Gastrocnemius medialis (tissue), 4 donors: ENCODE measurements at regions of chr3 and their contacts with region 1.

Region 1: GRCh38 chr3:59857589-59858346 is 807.9 kb upstream of the CFAP20DC start:
- DNase-seq: peak; percentile 42
- ATAC-seq: peak; percentile 74 to 83
- H3K4me3 ChIP-seq: no peak overlapping the region
- H3K27ac ChIP-seq: no peak overlapping the region
- H3K4me1 ChIP-seq: no peaks in the 10 kb centered on the region
- H3K27me3 ChIP-seq: no peaks in the 10 kb centered on the region
- CTCF ChIP-seq: peak; percentile 61 to 83 (median 66)
- POLR2A ChIP-seq: no peak

Region 2: DNA sequence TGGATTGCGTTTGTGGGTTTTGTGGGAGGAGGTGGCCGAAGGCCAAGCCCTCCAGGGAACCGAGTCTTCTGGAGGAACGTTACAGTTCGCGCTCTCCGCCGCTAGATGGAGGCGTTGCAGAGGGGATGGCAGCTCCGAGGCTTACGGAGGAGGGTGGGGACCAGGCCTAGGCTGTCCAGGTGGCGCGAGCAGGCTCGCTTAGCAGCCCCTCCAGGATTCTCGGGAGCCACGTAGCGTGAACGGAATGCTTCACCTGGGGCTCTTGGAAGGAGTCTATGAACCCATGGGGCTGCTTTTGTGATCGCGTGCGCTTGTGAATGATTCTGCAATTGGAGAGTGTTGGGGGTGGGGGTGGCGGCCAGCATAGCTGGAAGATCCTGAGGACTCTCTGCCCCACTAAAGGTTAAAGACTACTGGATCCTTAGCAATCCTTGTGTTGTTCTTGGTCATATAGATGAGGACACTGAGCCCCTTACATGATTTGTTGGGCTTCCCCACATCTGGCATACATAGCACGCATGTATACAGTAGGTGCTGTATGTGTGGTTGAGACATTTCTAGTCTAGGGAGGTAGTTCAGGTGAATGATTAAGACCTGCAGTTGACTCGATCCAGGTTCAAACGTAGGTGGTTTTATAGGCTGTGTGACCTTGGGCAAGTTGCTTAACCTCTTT is 1216.9 kb before region 1 on chr3:
- in situ Hi-C with region 1: loop called in 1 of 4 experiments (anchors 25 kb)
- intact Hi-C with region 1: no loop called
- DNase-seq: peak; percentile 15 to 46
- ATAC-seq: peak; percentile 78 to 87
- H3K4me3 ChIP-seq: no peak overlapping the region
- H3K27ac ChIP-seq: no peak overlapping the region
- H3K4me1 ChIP-seq: peaks cover 0 to 4% of the 10 kb centered on the region in 2 donors
- H3K27me3 ChIP-seq: no peaks in the 10 kb centered on the region
- CTCF ChIP-seq: peak; percentile 57 to 83 (median 73)
- POLR2A ChIP-seq: no peak

Region 3: GRCh38 chr3:59212128-59212779 is 645.5 kb before region 1 on chr3:
- in situ Hi-C with region 1: loop called in 2 of 4 experiments (anchors 25 kb)
- intact Hi-C with region 1: no loop called
- DNase-seq: no peak
- ATAC-seq: no peak
- H3K4me3 ChIP-seq: no peak overlapping the region
- H3K27ac ChIP-seq: no peak overlapping the region
- H3K4me1 ChIP-seq: no peaks in the 10 kb centered on the region
- H3K27me3 ChIP-seq: no peaks in the 10 kb centered on the region
- CTCF ChIP-seq: no peak
- POLR2A ChIP-seq: no peak

Region 4: GRCh38 chr3:59575113-59576001 is 282.4 kb before region 1 on chr3:
- in situ Hi-C with region 1: loop called in 3 of 4 experiments (anchors 5 to 10 kb)
- intact Hi-C with region 1: loop called (anchors 1 kb)
- DNase-seq: peak; percentile 43 to 56
- ATAC-seq: peak; percentile 68 to 79
- H3K4me3 ChIP-seq: no peak overlapping the region
- H3K27ac ChIP-seq: no peak overlapping the region
- H3K4me1 ChIP-seq: no peaks in the 10 kb centered on the region
- H3K27me3 ChIP-seq: no peaks in the 10 kb centered on the region
- CTCF ChIP-seq: peak; percentile 73 to 92 (median 83)
- POLR2A ChIP-seq: no peak

Region 5: GRCh38 chr3:59580996-59581395 is 276.8 kb before region 1 on chr3:
- in situ Hi-C with region 1: loop called in 3 of 4 experiments (anchors 5 to 10 kb)
- intact Hi-C with region 1: no loop called
- DNase-seq: no peak
- ATAC-seq: no peak
- H3K4me3 ChIP-seq: no peak overlapping the region
- H3K27ac ChIP-seq: no peak overlapping the region
- H3K4me1 ChIP-seq: no peaks in the 10 kb centered on the region
- H3K27me3 ChIP-seq: no peaks in the 10 kb centered on the region
- CTCF ChIP-seq: no peak
- POLR2A ChIP-seq: no peak